Testis (tissue), 5 donors: ENCODE measurements at regions of chr20 and their contacts with region 1.

Region 1: GRCh38 chr20:58888521-58889333 is 36.2 kb downstream of the GNAS start:
- DNase-seq: peak; percentile 84
- H3K4me3 ChIP-seq: peak overlapping the region; percentile 73 to 85
- H3K27ac ChIP-seq: peak overlapping the region; percentile 68 to 99
- H3K4me1 ChIP-seq: peaks cover 4% of the 10 kb centered on the region
- H3K27me3 ChIP-seq: no peaks in the 10 kb centered on the region
- CTCF ChIP-seq: no peak
- POLR2A ChIP-seq: no peak

Region 2: DNA sequence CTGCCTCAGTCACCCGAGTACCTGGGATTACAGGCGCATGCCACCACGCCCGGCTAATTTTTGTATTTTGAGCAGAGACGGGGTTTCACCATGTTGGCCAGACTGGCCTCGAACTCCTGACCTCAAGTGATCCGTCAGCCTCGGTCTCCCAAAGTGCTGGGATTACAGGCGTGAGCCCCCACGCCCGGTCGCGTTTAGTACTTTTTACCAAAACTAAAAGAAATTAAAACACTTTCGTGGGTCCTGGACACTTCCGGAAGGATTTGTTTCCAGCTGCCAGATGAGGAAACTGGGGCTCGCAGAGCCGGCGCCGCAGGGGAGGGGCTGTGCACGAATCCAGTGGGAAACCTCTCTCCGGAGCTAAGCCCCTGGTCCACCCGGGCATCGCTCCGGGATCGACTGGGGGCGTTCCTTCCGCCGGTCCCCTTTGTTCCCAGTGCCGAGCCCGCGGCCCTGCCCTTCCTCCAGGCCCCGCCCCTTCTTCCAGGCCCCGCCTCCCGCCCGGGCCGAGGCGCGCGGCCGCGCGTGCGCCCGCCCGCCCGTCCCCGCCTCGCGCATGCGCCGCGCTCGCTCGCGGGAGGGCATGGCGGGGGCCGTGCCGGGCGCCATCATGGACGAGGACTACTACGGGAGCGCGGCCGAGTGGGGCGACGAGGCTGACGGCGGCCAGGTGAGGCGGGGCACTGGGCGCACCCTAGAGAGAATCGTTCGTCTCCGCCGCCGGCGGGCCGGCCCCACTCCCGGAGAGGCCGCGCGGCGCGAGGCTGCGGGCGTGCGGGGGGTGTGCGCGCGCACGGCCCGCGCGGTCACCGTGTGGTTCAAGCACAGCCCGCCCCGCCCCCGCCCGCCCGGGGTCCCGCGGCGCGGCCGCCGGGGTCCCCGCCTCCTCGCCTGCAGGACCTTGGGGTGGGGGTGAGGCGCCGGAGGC is 92.2 kb after region 1 on chr20 and contains the start of gene NELFCD:
- intact Hi-C with region 1: loop called (anchors 5 kb)
- DNase-seq: peak; percentile 88
- H3K4me3 ChIP-seq: peak within 1 kb of the TSS; percentile 67 to 74
- H3K27ac ChIP-seq: peak within 1 kb of the TSS; percentile 74 to 92
- H3K4me1 ChIP-seq: peaks cover 8% of the 10 kb centered on the region
- H3K27me3 ChIP-seq: no peaks in the 10 kb centered on the region
- CTCF ChIP-seq: no peak
- POLR2A ChIP-seq: no peak
- total RNA-seq, gene NELFCD: 103 to 123 TPM

Region 3: DNA sequence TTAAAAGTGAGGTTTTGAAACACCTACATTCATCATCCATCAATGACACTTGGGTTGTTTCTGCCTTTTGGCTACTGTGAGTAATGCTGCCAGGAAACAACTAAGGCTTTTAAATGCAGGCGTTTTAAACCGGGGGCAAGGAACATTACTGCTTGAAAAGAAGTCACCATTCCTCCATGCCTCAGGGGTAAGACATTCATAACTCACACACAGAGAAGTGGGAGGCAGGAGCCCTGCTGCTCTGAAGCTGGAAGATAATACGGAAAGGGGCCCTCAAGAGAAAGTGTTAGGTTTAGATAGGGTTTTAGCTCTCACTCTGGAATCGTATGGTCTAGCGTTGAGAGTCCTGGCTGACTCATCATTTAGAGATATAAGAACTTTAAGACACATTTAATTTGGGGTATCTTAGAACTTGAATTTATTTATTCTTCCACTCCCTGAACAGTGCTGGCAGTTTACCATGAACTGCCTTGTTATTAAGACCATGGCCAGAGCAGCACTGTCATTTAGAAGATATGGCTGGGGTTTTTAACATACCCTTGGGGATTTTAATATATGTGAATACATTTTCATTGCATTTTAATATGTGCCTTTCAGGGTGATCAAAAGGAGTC is 132.3 kb after region 1 on chr20:
- intact Hi-C with region 1: loop called (anchors 10 kb)
- DNase-seq: peak; percentile 6
- H3K4me3 ChIP-seq: no peak overlapping the region
- H3K27ac ChIP-seq: no peak overlapping the region
- H3K4me1 ChIP-seq: peaks cover 21% of the 10 kb centered on the region
- H3K27me3 ChIP-seq: no peaks in the 10 kb centered on the region
- CTCF ChIP-seq: no peak
- POLR2A ChIP-seq: no peak